Astrocyte of the cerebellum (primary cell): ENCODE measurements at regions of chr11 and their contacts with region 1.

Region 1: GRCh38 chr11:35260342-35260985 is 121.5 kb downstream of the CD44 start:
- DNase-seq: peak; percentile 71
- H3K4me3 ChIP-seq: no peak overlapping the region
- CTCF ChIP-seq: no peak

Region 2: GRCh38 chr11:35173011-35173511 is 87.4 kb before region 1 on chr11:
- in situ Hi-C with region 1: no loop called
- DNase-seq: no peak
- H3K4me3 ChIP-seq: no peak overlapping the region
- CTCF ChIP-seq: no peak

Region 3: GRCh38 chr11:35192347-35192746 is 68.1 kb before region 1 on chr11:
- in situ Hi-C with region 1: no loop called
- DNase-seq: no peak
- H3K4me3 ChIP-seq: no peak overlapping the region
- CTCF ChIP-seq: no peak

Region 4: GRCh38 chr11:35214792-35215193 is 45.7 kb before region 1 on chr11:
- in situ Hi-C with region 1: loop called (anchors 5 kb)
- DNase-seq: peak; percentile 98
- H3K4me3 ChIP-seq: no peak overlapping the region
- CTCF ChIP-seq: no peak